Cardiac septum (tissue), 1 donor: ENCODE measurements at regions of chr11 and their contacts with region 1.

Region 1: DNA sequence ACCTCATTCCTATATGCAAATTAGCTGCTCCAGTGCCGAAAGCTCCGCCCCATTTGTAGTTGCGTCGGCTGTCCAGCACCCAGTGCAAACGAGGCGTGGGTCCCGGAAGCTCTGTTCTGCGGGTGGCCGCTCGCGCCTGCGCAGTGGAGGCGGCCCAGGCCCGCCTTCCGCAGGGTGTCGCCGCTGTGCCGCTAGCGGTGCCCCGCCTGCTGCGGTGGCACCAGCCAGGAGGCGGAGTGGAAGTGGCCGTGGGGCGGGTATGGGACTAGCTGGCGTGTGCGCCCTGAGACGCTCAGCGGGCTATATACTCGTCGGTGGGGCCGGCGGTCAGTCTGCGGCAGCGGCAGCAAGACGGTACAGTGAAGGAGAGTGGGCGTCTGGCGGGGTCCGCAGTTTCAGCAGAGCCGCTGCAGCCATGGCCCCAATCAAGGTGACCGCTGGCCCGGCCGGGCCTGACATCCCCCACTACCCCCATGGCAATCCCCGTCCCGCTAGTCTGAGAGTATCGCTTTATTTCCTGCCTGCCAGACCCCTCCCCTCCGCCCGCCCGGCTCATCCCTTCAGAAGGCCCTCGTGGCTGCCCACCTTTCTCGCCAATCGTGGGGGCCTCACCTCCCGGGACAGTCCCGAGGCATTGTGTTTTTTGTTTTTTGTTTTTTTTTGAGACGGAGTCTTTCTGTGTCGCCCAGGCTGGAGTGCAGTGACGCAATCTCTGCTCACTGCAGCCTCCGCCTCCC is at the start of gene PRDX5:
- DNase-seq: peak; percentile 99
- total RNA-seq, gene PRDX5: 208 TPM

Region 2: DNA sequence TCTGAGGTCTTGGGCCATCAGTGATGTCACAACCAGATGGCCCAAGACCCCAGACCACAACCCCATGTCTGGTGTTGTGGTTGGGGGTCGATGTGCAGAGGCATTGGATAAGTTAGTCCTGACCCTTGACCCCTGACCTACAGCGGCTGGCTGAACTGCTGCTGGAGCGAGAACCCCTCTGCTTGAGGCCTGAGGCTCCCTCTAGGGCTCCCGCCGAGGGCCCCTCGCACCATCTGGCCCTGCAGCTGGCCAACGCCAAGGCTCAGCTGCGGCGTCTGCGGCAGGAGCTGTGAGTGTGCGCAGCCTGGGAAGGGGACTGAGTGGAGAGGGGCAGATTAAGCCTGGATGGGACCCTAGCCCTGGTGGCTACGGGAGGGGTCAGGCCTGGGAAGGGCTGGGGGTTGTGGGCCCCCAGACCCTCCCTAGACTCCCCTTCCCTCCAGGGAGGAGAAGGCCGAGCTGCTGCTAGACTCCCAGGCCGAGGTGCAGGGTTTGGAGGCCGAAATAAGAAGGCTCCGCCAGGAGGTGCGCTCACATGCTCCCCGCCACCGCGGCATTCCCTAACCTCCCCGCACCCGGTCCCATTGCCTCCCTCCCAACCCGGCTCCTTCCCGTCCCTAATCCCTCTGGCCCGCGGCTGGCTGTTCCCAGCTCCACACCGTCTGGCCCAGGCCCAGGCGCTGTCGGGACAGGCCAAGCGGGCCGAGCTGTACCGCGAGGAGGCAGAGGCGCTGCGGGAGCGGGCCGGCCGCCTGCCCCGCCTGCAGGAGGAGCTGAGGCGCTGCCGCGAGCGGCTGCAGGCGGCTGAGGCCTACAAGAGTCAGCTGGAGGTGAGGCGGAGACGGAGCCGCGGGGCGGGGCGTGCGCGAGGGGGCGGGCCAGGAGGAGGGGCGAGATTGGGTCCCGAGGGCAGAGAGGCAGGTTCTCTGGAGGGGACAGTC is 24.0 kb after region 1 on chr11:
- intact Hi-C with region 1: loop called (anchors 2 kb)
- DNase-seq: peak; percentile 96

Region 3: GRCh38 chr11:64358907-64359711 is 41.0 kb after region 1 on chr11 and contains the start of gene RPS6KA4:
- intact Hi-C with region 1: loop called (anchors 2 kb)
- DNase-seq: peak; percentile 84
- total RNA-seq, gene RPS6KA4: 15.4 TPM